AG04450 (cell line): ENCODE measurements at regions of chr1 and their contacts with region 1.

Region 1: DNA sequence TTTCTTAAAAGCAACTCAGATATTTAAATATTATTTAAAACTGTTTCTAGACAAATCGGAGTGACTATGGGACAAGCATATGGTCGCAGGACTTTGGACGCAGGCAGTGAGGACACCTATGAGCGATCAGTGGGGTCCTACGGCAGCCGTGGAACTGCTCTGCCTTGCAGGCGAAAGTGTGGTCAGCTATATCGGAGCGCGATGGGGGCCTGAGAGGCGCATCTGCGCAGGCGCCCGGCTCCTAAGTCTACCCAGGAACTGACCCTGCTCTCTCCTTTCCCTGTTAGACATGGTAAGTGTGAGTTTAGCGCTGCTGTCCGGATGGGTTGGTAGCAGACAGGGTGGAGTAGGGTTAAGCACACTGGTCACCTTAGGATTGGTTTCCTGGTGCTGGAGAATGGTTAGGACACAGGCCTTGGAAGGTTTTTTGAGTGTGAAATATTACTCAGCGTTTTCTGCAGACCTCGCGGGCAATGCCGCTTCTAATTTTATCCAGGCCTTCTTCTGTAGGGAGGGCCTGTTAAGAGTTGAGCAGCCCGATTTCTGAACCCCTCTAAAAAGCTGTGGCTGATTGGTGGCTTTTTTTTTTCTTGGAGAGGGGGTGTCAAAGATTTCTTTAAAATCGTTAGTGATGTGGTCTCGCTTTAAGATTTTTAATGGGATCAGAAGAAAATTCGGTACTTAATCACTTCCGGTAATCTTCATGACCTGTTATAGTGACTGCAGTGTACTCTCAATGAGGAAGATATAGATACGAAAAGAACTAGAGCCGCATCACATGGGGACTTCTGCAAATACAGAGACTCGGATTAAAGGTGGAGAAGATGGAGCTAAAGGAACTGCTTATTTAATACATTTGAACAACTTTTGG is at the start of gene RABGGTB:
- DNase-seq: peak; percentile 91
- H3K4me3 ChIP-seq: peak within 1 kb of the TSS; percentile 73
- H3K27ac ChIP-seq: peak within 1 kb of the TSS; percentile 35
- H3K27me3 ChIP-seq: no peaks in the 10 kb centered on the region
- CTCF ChIP-seq: no peak
- polyA plus RNA-seq, gene RABGGTB: 88.9 and 122 TPM in 2 replicates

Region 2: GRCh38 chr1:75765697-75766355 is 20.4 kb before region 1 on chr1:
- CTCF ChIA-PET with region 1: no interaction called
- POLR2A ChIA-PET with region 1: interaction called, 12 read pairs
- DNase-seq: peak; percentile 51
- H3K4me3 ChIP-seq: no peak overlapping the region
- H3K27ac ChIP-seq: peak overlapping the region; percentile 42
- H3K27me3 ChIP-seq: no peaks in the 10 kb centered on the region
- CTCF ChIP-seq: no peak